ENCODE measurements at regions of chr4 and their contacts with region 1.

Region 1: DNA sequence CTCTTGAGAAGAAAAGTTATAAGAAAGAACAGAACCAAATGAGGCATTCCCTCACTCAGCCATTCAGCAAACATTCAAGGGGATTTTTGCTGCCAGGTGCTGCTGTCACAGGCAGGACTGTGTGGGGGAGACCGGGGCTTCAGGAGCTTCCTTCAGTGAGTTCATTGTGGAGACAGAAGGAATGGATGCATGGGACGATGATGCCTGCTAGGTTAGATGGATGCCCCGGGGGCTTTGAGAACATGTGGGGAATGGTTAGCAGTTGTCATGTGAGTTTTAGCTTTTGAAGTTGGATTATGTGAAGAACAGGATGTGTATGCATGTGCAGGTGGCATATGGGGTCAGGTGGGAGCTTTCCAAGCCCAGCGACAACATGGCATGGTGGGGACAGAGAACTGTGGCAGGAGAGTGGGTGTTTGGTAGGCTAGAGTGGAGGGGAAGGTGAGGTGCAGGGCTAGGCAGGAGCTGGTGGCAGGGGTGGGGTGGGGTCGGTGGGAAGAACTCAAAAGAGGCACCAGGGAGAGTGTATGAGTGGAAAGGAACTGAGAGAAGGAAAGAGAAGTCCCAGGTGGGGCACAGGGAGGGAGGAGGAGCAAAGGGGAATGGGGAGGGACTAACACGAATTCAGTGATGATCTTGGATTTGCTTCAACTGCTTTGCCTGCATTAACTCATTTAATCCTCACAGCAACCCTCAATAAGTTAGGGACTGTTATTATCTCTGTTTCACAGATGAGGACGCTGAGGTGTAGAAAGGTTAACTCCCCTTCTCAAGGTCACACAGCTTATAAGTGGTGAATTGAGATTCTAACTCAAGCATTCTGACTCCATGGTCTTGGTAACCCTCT is 8.4 kb downstream of the DCUN1D4 start:
- DNase-seq: no peak
- H3K4me3 ChIP-seq: no peak overlapping the region
- H3K27ac ChIP-seq: no peak overlapping the region
- H3K4me1 ChIP-seq: peaks cover 11% of the 10 kb centered on the region; the same call in 1 of the 2 replicates
- H3K27me3 ChIP-seq: no peaks in the 10 kb centered on the region
- CTCF ChIP-seq: no peak

Region 2: GRCh38 chr4:51831133-51831532 is 20.2 kb before region 1 on chr4:
- CTCF ChIA-PET with region 1: no interaction called
- POLR2A ChIA-PET with region 1: no interaction called
- intact Hi-C with region 1: no loop called
- DNase-seq: peak in 1 of 2 experiments; percentile 37
- H3K4me3 ChIP-seq: no peak overlapping the region
- H3K27ac ChIP-seq: no peak overlapping the region
- H3K4me1 ChIP-seq: no peaks in the 10 kb centered on the region
- H3K27me3 ChIP-seq: no peaks in the 10 kb centered on the region
- CTCF ChIP-seq: peak; percentile 56

Region 3: DNA sequence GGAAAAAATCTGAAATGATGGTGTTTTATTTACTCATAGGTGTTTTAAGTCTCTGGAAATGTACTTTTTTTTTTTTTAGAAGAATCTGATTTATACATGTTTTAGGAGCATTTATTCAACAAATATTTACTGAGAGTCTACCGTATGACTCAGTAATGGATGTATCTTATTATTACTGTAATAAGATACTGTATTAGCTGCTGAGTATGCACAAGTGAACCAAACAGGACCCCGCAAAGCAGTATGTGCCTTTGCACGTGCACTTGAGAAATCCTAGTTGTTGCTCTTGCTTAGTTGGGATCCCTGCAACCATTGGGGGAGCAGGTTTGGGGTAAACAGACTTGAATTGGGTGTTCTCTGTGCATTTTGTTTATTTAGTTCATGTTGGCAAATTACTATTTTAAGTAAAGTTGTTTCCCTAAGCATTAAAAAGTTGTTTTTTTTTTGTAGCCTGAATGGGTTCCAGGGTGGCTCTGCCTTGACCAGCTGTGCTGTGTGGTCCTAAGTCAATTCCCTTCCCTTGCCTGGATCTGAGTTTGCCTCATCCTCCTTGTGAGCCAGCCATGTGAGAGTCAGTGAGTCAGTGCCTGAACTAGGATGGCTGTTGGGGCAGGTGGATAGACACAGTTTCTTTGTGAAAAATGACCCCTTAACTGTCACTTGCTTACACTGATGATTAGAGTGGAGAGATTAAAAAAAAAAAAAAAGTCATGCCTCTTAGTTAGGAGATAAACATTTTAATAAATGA is 19.3 kb after region 1 on chr4:
- CTCF ChIA-PET with region 1: no interaction called
- POLR2A ChIA-PET with region 1: no interaction called
- intact Hi-C with region 1: loop called (anchors 2 kb)
- DNase-seq: no peak
- H3K4me3 ChIP-seq: no peak overlapping the region
- H3K27ac ChIP-seq: no peak overlapping the region
- H3K4me1 ChIP-seq: no peaks in the 10 kb centered on the region
- H3K27me3 ChIP-seq: no peaks in the 10 kb centered on the region
- CTCF ChIP-seq: no peak